GM12878 (cell line): ENCODE measurements at regions of chr12 and their contacts with region 1.

Region 1: DNA sequence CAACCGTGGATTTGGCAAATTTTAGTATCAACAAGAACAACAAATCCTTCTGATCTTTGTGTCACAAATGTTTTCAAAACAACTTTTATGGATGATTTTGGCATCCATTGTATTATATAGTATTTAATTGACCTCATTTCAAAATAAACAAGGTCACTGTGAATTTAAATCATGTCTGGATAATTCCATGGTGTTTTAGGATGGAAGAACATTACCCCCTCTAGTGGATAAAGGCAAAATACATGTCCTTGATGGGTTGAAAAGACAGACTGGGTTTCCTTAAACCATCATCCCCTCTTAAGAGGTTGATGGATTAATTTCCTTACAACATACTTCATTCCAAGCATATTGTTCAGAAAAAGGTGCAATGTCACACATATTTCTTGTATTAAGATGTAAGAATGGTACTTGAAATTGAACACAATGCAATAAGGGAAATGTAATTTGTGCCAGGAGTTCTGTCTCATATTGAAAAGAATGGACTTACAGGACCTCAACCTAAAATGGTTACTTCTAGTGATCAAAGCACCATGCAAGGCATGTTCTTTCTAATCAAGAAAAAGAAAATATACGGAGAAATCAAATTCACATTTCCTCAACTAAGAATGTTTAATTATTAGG is 352.0 kb downstream of the BCAT1 start:
- DNase-seq: no peak
- ATAC-seq: peak; percentile 42; the same call in 1 of the 3 replicates
- H3K4me3 ChIP-seq: no peak overlapping the region
- H3K27ac ChIP-seq: no peak overlapping the region
- H3K4me1 ChIP-seq: no peaks in the 10 kb centered on the region
- H3K27me3 ChIP-seq: no peaks in the 10 kb centered on the region
- CTCF ChIP-seq: peak; percentile 53 to 55 (median 55)
- EP300 ChIP-seq: no peak
- POLR2A ChIP-seq: no peak
- RAD21 ChIP-seq: peak; percentile 55

Region 2: GRCh38 chr12:24728366-24728765 is 131.5 kb after region 1 on chr12:
- CTCF ChIA-PET with region 1: interaction called, 4 read pairs
- POLR2A ChIA-PET with region 1: no interaction called
- RAD21 ChIA-PET with region 1: no interaction called
- SMC1A ChIA-PET with region 1: no interaction called
- in situ Hi-C with region 1: no loop called
- intact Hi-C with region 1: loop called (anchors 5 kb)
- DNase-seq: no peak
- ATAC-seq: peak; percentile 82
- H3K4me3 ChIP-seq: no peak overlapping the region
- H3K27ac ChIP-seq: no peak overlapping the region
- H3K4me1 ChIP-seq: peaks cover 7% of the 10 kb centered on the region
- H3K27me3 ChIP-seq: peaks cover 0 to 5% of the 10 kb centered on the region in 2 experiments; a peak in 2 of 4 replicates
- CTCF ChIP-seq: peak; percentile 43 to 47 (median 44); a peak in 5 of 6 replicates
- EP300 ChIP-seq: no peak
- POLR2A ChIP-seq: no peak
- RAD21 ChIP-seq: peak; percentile 76

Region 3: DNA sequence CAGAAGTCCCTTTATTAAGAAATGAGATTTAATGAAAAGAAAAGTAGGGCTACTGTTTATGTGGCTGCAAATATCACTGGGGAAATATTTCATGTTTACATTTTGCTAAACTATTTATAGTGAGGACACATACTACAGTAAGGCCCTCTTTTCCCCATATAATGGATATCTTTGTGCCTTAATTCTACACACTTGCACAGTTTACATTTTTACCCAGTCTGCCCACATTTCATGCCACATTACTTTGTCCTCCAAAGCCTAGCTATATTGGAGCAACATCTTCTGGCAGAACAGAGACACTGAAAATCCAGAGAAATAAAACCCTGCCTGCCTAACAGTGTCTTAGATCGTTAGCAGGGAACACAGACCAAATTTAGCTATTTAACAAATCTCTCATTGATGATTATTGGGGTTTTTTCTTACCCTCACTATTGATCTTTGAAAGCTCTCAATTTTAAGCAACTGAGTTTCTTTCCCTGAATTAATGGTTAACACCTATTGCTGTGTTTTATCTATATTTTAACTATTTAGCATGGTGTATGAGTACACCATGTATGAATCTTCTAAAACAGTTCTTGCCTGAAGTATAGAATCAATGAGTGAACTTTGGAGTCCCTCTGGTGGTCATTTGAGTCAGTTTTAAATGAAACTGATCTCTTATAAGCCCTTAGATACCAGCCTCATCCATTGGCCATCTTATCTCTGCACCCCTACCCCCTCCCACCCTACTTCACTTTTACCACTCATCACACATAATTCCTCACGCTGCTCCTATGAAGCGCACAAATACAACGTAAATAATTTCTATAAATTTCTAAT is 181.8 kb after region 1 on chr12:
- CTCF ChIA-PET with region 1: interaction called, 3 read pairs
- POLR2A ChIA-PET with region 1: no interaction called
- RAD21 ChIA-PET with region 1: interaction called, 5 read pairs
- SMC1A ChIA-PET with region 1: interaction called, 5 read pairs
- in situ Hi-C with region 1: no loop called
- intact Hi-C with region 1: loop called (anchors 5 kb)
- DNase-seq: peak; percentile 8
- ATAC-seq: peak; percentile 90
- H3K4me3 ChIP-seq: no peak overlapping the region
- H3K27ac ChIP-seq: no peak overlapping the region
- H3K4me1 ChIP-seq: no peaks in the 10 kb centered on the region
- H3K27me3 ChIP-seq: no peaks in the 10 kb centered on the region
- CTCF ChIP-seq: peak; percentile 37 to 67 (median 43); a peak in 4 of 6 replicates
- EP300 ChIP-seq: no peak
- POLR2A ChIP-seq: no peak
- RAD21 ChIP-seq: peak; percentile 87